Body of pancreas (tissue), 4 donors: ENCODE measurements at regions of chr5 and their contacts with region 1.

Region 1: DNA sequence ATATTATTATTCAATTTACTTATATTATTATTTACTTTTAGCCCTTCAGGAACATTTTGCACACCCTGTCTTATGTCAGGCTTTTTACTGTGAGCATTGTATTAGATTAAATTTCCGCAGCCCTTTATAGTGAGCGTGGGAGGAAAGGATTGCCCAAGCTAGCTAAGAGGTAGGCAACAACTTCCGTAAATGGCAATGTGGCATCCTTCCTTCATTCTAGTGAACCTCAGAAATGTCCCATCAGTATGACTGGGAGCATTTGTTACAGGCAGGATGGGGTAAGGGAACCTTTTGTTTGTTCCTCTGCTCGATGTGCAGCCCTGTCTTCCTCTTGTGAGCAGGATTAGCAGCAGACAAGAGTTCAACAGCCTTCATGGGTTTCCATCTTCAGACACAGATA is 6.2 kb upstream of the CD180 start:
- DNase-seq: peak in 1 of 4 donors; percentile 40
- ATAC-seq: no peak
- H3K4me3 ChIP-seq: no peak overlapping the region
- H3K27ac ChIP-seq: no peak overlapping the region
- H3K4me1 ChIP-seq: no peaks in the 10 kb centered on the region
- H3K27me3 ChIP-seq: no peaks in the 10 kb centered on the region
- CTCF ChIP-seq: no peak
- POLR2A ChIP-seq: no peak

Region 2: GRCh38 chr5:67165526-67166459 is 37.0 kb before region 1 on chr5:
- intact Hi-C with region 1: loop called (anchors 5 kb)
- DNase-seq: peak; percentile 74 to 84 (median 82)
- ATAC-seq: peak; percentile 89
- H3K4me3 ChIP-seq: no peak overlapping the region
- H3K27ac ChIP-seq: peak overlapping the region in 3 of 4 donors; percentile 1 to 62 (median 55)
- H3K4me1 ChIP-seq: peaks cover 16% of the 10 kb centered on the region
- H3K27me3 ChIP-seq: no peaks in the 10 kb centered on the region
- CTCF ChIP-seq: peak; percentile 41 to 79 (median 68)
- POLR2A ChIP-seq: peak in 2 of 3 donors; percentile 19 to 41

Region 3: GRCh38 chr5:67315082-67315989 is 112.5 kb after region 1 on chr5:
- intact Hi-C with region 1: no loop called
- DNase-seq: peak in 1 of 4 donors; percentile 16
- ATAC-seq: peak; percentile 47
- H3K4me3 ChIP-seq: no peak overlapping the region
- H3K27ac ChIP-seq: peak overlapping the region in 2 of 4 donors; percentile 4 to 43
- H3K4me1 ChIP-seq: no peaks in the 10 kb centered on the region
- H3K27me3 ChIP-seq: no peaks in the 10 kb centered on the region
- CTCF ChIP-seq: no peak
- POLR2A ChIP-seq: no peak

Region 4: GRCh38 chr5:67669916-67670315 is 467.1 kb after region 1 on chr5:
- intact Hi-C with region 1: no loop called
- DNase-seq: no peak
- ATAC-seq: no peak
- H3K4me3 ChIP-seq: no peak overlapping the region
- H3K27ac ChIP-seq: no peak overlapping the region
- H3K4me1 ChIP-seq: no peaks in the 10 kb centered on the region
- H3K27me3 ChIP-seq: no peaks in the 10 kb centered on the region
- CTCF ChIP-seq: no peak
- POLR2A ChIP-seq: no peak